ENCODE measurements at regions of chr1 and their contacts with region 1.

Region 1: GRCh38 chr1:220690140-220691025 is at the start of gene C1orf115:
- DNase-seq: peak; percentile 42 to 93 (median 62)

Region 2: DNA sequence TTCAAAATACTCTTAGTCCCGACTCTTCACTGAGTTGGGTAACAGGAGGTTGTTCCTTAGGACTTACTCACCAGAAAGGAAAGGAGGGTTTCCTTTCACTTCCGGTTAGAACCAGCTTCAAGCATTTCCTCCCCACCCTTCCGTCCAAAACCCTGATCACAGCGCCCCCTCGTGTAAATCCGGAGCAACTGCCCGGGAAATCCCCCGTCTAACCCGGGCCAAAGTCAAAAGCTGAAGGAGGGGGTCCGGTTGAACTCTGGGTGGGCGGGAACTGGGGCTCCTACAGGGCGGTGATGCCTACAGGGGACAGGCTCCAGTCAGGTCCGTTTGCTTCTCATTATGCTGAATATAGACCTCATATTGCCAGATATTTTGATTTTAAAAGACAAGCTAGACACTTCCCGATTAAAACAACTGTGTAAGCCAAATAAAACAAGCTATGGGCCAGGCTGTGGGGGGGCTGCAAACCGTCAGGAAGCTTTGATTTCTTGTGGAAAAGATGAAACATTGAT is 42.8 kb after region 1 on chr1:
- intact Hi-C with region 1: loop called (anchors 5 kb)
- DNase-seq: peak; percentile 45 to 95 (median 62)